ENCODE measurements at regions of chr3 and their contacts with region 1.

Region 1: GRCh38 chr3:129249276-129250065 is at the start of gene COPG1:
- DNase-seq: peak; percentile 88
- H3K4me3 Mint-ChIP-seq: peak within 1 kb of the TSS; percentile 99
- H3K27ac Mint-ChIP-seq: peak within 1 kb of the TSS; percentile 98
- H3K4me1 Mint-ChIP-seq: peaks cover 34% of the 10 kb centered on the region
- H3K27me3 Mint-ChIP-seq: no peaks in the 10 kb centered on the region
- total RNA-seq, gene COPG1: 182 and 187 TPM in 2 replicates

Region 2: DNA sequence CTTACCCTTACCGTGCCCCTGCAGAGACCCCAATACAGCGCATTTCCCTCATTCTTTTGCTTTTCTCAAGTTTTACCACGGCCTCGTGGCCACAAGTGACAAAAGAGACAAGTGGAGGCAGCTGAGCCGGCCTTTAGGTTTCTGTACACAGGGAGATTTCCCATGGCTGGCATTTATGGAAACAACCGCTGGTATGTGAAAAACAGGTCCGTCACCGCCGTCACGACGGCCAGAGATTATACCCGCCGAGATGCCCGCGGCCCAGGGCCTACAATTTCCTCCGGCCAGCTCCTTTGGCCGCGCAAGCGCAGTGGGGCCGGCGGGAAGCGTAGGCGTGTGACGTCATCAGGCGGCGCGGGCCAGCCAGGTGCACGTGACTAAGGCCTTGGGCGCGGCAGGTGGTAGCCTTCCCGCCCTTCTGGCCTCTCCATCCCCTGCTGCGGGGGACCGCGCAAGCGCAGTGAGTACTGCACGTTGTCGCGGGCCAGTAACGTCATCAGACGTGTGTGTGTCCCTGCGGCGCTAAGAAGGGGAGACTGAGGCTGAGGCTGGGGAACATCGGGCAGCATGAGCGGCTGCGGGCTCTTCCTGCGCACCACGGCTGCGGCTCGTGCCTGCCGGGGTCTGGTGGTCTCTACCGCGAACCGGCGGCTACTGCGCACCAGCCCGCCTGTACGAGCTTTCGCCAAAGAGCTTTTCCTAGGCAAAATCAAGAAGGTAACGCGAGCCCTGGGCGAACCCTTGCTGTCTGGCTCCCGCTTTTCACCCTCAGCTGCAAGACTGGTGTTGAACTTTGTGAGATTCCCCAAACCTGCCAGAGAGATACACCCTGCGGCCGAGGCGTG is 370.1 kb before region 1 on chr3 and contains the start of gene ACAD9:
- intact Hi-C with region 1: loop called (anchors 5 kb)
- DNase-seq: peak; percentile 98
- H3K4me3 Mint-ChIP-seq: peak within 1 kb of the TSS; percentile 93
- H3K27ac Mint-ChIP-seq: peak within 1 kb of the TSS; percentile 95
- H3K4me1 Mint-ChIP-seq: peaks cover 51% of the 10 kb centered on the region
- H3K27me3 Mint-ChIP-seq: no peaks in the 10 kb centered on the region
- total RNA-seq, gene ACAD9: 60.8 and 68.9 TPM in 2 replicates

Region 3: DNA sequence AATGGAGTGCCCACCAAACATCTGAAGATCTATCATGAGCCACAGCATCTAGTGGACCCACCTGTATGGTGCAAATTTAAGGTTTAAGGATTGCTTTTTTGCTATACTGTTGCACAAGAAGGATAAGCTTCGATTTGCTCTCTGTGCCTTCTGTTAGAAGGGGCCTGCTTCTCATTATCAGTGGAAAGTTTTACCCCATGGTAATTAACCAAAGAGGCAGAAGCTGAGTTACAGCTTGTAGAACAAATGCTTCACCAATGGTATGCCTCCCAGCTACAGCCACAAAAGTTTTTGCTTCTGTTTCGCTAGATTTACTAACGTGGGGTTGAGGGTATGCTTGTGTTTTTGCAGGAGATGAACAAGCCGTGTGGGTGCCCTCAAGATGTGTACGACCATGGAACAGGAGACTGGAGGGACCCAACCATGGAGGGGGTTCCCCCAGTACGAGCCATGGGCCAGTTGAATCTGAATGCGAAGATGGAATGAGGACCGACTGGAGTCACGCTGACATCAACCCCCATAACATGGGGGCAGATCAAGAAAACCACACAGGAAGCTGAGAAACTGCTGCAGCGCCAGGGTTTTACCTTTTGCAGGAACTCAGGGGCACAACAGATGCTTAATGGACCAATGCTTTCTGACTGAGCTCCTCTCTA is 326.5 kb before region 1 on chr3:
- intact Hi-C with region 1: no loop called
- DNase-seq: peak; percentile 37
- H3K4me3 Mint-ChIP-seq: peak overlapping the region; percentile 58
- H3K27ac Mint-ChIP-seq: peak overlapping the region; percentile 78
- H3K4me1 Mint-ChIP-seq: peaks cover 23% of the 10 kb centered on the region
- H3K27me3 Mint-ChIP-seq: peaks cover 2% of the 10 kb centered on the region

Region 4: GRCh38 chr3:128969993-128970739 is 279.3 kb before region 1 on chr3:
- intact Hi-C with region 1: loop called (anchors 2 kb)
- DNase-seq: peak; percentile 40
- H3K4me3 Mint-ChIP-seq: no peak overlapping the region
- H3K27ac Mint-ChIP-seq: no peak overlapping the region
- H3K4me1 Mint-ChIP-seq: peaks cover 3% of the 10 kb centered on the region
- H3K27me3 Mint-ChIP-seq: peaks cover 8% of the 10 kb centered on the region

Region 5: GRCh38 chr3:129052675-129053074 is 196.8 kb before region 1 on chr3:
- intact Hi-C with region 1: loop called (anchors 2 kb)
- DNase-seq: no peak
- H3K4me3 Mint-ChIP-seq: no peak overlapping the region
- H3K27ac Mint-ChIP-seq: no peak overlapping the region
- H3K4me1 Mint-ChIP-seq: peaks cover 6% of the 10 kb centered on the region
- H3K27me3 Mint-ChIP-seq: peaks cover 11% of the 10 kb centered on the region

Region 6: DNA sequence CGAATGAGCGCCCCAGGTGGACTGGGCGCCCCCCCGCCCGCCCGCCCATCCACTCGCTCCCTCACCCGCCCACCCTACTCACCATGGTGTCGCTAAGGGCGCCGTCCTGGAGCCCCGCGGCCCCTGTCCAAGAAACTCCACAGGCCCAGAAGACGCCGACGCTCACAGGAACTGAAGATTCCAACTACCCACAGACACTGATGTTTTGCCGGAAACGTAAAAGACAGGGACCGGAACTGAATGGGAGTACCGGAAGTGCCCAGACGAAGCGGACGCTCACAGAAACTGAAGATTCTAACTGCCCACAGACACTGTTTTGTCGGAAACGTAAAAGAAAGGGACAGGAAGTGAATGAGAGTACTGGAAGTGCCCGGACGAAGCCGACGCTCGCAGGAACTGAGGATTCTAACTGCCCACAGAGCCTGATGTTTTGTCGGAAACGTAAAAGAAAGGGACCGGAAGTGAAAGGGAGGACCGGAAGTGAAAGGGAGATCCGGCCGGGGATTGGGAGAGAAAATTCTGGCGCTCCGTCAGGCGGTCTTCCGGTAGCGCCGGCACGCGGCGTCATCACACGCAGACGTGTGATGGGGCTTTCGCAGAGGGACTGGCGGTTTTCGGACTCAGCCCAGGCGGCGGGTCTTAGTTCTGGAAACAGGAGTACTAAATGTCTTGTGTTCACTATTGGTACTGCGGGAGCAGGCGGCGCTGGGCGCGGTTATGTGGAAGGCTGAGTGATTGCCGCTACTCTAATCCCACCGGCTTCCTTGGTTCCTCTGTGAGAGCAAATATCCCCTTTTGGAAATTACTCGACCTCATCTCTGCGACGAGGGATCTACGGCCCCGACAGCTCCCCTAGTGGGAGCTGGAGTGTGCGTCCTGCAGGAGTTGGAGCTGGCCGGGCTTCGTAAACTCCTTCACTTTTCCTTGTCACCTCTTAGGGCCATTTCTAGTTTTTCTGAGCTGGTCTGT is 88.3 kb before region 1 on chr3 and contains the start of gene ISY1:
- intact Hi-C with region 1: loop called (anchors 1 kb)
- DNase-seq: peak; percentile 89
- H3K4me3 Mint-ChIP-seq: peak within 1 kb of the TSS; percentile 88
- H3K27ac Mint-ChIP-seq: peak within 1 kb of the TSS; percentile 98
- H3K4me1 Mint-ChIP-seq: peaks cover 27% of the 10 kb centered on the region
- H3K27me3 Mint-ChIP-seq: no peaks in the 10 kb centered on the region
- total RNA-seq, gene ISY1: 71.4 and 78.0 TPM in 2 replicates

Region 7: DNA sequence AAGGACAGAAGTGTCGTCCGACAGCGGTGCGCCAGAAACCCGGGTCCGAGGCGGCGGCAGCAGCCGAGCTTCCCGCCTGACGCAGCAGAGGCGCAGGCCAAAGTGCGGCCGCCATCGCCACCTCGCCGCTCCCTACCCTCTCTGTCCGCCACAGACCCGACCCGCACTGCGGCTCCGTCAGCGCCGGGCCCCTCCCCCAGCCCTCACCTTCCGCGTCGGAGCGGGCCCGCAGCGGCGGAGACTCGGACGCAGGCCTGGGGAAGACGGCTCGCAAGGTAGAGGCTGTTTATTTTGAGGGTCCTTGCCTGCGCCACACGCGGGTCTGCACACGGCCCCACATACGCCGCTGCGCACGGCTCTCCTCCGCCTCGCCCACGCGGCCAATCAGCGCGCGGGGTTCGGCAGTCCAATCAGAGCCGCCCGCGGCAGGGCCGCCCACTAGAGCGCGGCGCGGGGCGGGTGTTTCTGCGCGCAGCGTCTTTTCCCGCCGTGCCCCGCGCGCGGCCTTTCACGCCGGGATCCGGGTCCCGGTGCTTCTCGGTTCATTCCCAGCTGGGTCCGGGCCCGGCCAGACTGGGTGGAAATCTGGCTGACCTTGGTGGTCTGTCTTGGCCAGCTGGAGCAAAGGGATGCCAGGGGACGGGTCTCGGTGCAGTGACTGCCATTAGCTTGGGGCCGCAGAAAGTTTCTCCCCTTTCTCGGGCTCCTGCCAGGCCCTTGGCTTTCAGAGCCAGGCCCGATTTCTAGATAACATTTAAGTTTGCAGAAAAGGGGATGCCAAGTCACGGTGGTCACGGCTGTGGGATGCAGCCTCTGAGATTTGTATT is 65.7 kb before region 1 on chr3 and contains the start of gene CNBP:
- intact Hi-C with region 1: loop called (anchors 1 kb)
- DNase-seq: peak; percentile 91
- H3K4me3 Mint-ChIP-seq: peak within 1 kb of the TSS; percentile 97
- H3K27ac Mint-ChIP-seq: peak within 1 kb of the TSS; percentile 98
- H3K4me1 Mint-ChIP-seq: peaks cover 42% of the 10 kb centered on the region
- H3K27me3 Mint-ChIP-seq: no peaks in the 10 kb centered on the region
- total RNA-seq, gene CNBP: 351 TPM in 2 replicates

Region 8: GRCh38 chr3:129278439-129278970 is 29.0 kb after region 1 on chr3 and contains the start of gene HMCES:
- intact Hi-C with region 1: loop called (anchors 2 kb)
- DNase-seq: peak; percentile 93
- H3K4me3 Mint-ChIP-seq: peak within 1 kb of the TSS; percentile 98
- H3K27ac Mint-ChIP-seq: peak within 1 kb of the TSS; percentile 96
- H3K4me1 Mint-ChIP-seq: peaks cover 42% of the 10 kb centered on the region
- H3K27me3 Mint-ChIP-seq: no peaks in the 10 kb centered on the region
- total RNA-seq, gene HMCES: 63.6 and 70.7 TPM in 2 replicates

Region 9: GRCh38 chr3:129732200-129732876 is 482.9 kb after region 1 on chr3:
- intact Hi-C with region 1: no loop called
- DNase-seq: no peak
- H3K4me3 Mint-ChIP-seq: no peak overlapping the region
- H3K27ac Mint-ChIP-seq: no peak overlapping the region
- H3K4me1 Mint-ChIP-seq: peaks cover 4% of the 10 kb centered on the region
- H3K27me3 Mint-ChIP-seq: no peaks in the 10 kb centered on the region

Region 10: GRCh38 chr3:129794311-129795185 is 545.1 kb after region 1 on chr3:
- intact Hi-C with region 1: no loop called
- DNase-seq: no peak
- H3K4me3 Mint-ChIP-seq: no peak overlapping the region
- H3K27ac Mint-ChIP-seq: no peak overlapping the region
- H3K4me1 Mint-ChIP-seq: peaks cover 11% of the 10 kb centered on the region
- H3K27me3 Mint-ChIP-seq: no peaks in the 10 kb centered on the region

Measured in activated T-helper 2 cell treated with anti-CD3 and anti-CD28 coated beads, Interferon-gamma antibody, Interleukin-2, Interleukin-4, amounts not matched to agents 10 μg/mL and 5 μg/mL and 100 μg/mL, durations not matched to agents 14 hours and 24 hours and 36 hours (primary cell).